Left ventricle myocardium inferior (tissue), 1 donor: ENCODE measurements at regions of chr10 and their contacts with region 1.

Region 1: GRCh38 chr10:17257466-17258321 is 29.7 kb downstream of the VIM start:
- DNase-seq: no peak
- H3K4me3 ChIP-seq: peak overlapping the region; percentile 26
- H3K27ac ChIP-seq: no peak overlapping the region
- H3K4me1 ChIP-seq: peaks cover 5% of the 10 kb centered on the region
- H3K27me3 ChIP-seq: no peaks in the 10 kb centered on the region
- CTCF ChIP-seq: peak; percentile 92

Region 2: DNA sequence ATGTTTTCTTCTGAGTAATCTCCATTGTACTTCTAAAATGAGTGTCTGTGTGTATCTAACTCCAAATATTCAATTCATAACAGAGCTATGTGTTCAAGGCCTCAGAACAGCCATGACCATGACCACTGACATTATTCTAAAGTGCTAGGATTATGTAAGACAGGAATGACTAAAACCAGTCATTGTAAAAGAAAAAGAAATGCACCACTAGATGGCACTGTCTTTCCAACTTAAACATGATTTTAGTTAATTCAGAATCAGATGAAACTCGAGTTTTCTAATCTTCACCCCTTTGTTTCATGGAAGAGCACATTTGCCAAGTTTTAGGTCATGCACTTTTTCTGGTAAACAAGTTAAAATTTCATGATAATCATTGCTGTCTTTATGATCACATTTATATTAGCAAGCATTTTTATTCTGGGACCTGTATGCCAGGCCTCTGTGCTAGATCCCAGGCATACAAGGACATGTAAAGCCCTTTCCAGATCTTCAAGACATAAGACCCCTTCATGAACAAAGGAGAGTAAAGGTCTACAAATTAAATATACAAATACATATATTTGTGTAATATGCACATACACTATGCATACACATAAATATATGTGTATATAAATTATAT is 414.3 kb before region 1 on chr10:
- intact Hi-C with region 1: loop called (anchors 5 kb)
- DNase-seq: no peak
- H3K4me3 ChIP-seq: no peak overlapping the region
- H3K27ac ChIP-seq: no peak overlapping the region
- H3K4me1 ChIP-seq: no peaks in the 10 kb centered on the region
- H3K27me3 ChIP-seq: no peaks in the 10 kb centered on the region
- CTCF ChIP-seq: peak; percentile 76

Region 3: GRCh38 chr10:16891375-16892313 is 366.1 kb before region 1 on chr10:
- intact Hi-C with region 1: loop called (anchors 10 kb)
- DNase-seq: peak; percentile 68
- H3K4me3 ChIP-seq: no peak overlapping the region
- H3K27ac ChIP-seq: peak overlapping the region; percentile 49
- H3K4me1 ChIP-seq: peaks cover 4% of the 10 kb centered on the region
- H3K27me3 ChIP-seq: no peaks in the 10 kb centered on the region
- CTCF ChIP-seq: peak; percentile 75

Region 4: GRCh38 chr10:17617031-17617911 is 359.6 kb after region 1 on chr10 and contains the start of gene HACD1:
- intact Hi-C with region 1: no loop called
- DNase-seq: peak; percentile 74
- H3K4me3 ChIP-seq: peak within 1 kb of the TSS; percentile 91
- H3K27ac ChIP-seq: peak within 1 kb of the TSS; percentile 97
- H3K4me1 ChIP-seq: peaks cover 32% of the 10 kb centered on the region
- H3K27me3 ChIP-seq: peaks cover 11% of the 10 kb centered on the region
- CTCF ChIP-seq: no peak
- total RNA-seq, gene HACD1: 173 TPM